Activated naive CD4-positive, alpha-beta T cell treated with anti-CD3 and anti-CD28 coated beads for 36 hours (primary cell): ENCODE measurements at regions of chr1 and their contacts with region 1.

Region 1: GRCh38 chr1:12124693-12125421 is 41.9 kb upstream of the TNFRSF1B start:
- DNase-seq: peak; percentile 88
- H3K4me3 Mint-ChIP-seq: no peak overlapping the region
- H3K27ac Mint-ChIP-seq: no peak overlapping the region
- H3K4me1 Mint-ChIP-seq: peaks cover 44% of the 10 kb centered on the region
- H3K27me3 Mint-ChIP-seq: no peaks in the 10 kb centered on the region

Region 2: GRCh38 chr1:11681071-11681771 is 443.6 kb before region 1 on chr1 and contains the start of gene MAD2L2:
- CTCF ChIA-PET with region 1: no interaction called
- intact Hi-C with region 1: no loop called
- DNase-seq: peak; percentile 92
- H3K4me3 Mint-ChIP-seq: peak within 1 kb of the TSS; percentile 85
- H3K27ac Mint-ChIP-seq: peak within 1 kb of the TSS; percentile 88
- H3K4me1 Mint-ChIP-seq: peaks cover 10% of the 10 kb centered on the region
- H3K27me3 Mint-ChIP-seq: no peaks in the 10 kb centered on the region
- total RNA-seq, gene MAD2L2: 86.7 to 88.3 TPM

Region 3: GRCh38 chr1:12161662-12162458 is 37.0 kb after region 1 on chr1:
- CTCF ChIA-PET with region 1: interaction called, 12 read pairs
- intact Hi-C with region 1: loop called (anchors 2 kb)
- DNase-seq: peak; percentile 92
- H3K4me3 Mint-ChIP-seq: no peak overlapping the region
- H3K27ac Mint-ChIP-seq: peak overlapping the region; percentile 83
- H3K4me1 Mint-ChIP-seq: peaks cover 70% of the 10 kb centered on the region
- H3K27me3 Mint-ChIP-seq: no peaks in the 10 kb centered on the region

Region 4: DNA sequence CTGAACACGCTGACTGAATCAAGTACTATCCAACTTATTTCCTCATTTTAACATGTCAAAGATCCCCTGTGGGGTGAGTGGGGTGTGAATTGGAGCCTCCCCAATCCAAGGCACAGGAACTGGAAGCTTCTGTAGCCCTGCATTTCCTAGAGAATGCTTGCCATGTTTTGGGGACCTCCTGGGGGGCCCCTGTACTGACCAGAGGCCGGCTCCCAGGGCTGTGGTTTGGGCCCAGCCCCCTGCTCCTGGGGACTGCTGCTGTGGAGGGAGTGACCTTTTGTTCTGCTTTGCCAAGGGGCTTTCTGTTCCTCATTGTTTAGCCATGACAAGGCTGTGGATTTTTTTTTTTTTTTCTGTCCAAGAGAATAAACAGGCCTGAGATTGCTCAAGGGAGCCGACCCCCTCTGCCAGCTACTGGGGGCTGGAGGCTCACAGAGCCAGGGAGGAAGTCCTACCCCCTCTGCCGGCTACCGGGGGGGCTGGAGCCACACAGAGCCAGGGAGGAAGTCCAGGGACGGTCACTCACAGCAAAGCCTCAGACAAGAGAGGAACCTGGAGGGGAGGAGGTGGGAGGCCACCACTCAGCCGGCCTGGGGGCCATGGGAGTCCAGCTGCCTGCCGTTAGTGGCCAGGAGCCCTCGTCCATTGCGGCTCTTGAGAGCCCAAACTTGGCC is 59.3 kb after region 1 on chr1:
- CTCF ChIA-PET with region 1: interaction called, 33 read pairs
- intact Hi-C with region 1: no loop called
- DNase-seq: no peak
- H3K4me3 Mint-ChIP-seq: no peak overlapping the region
- H3K27ac Mint-ChIP-seq: no peak overlapping the region
- H3K4me1 Mint-ChIP-seq: peaks cover 44% of the 10 kb centered on the region
- H3K27me3 Mint-ChIP-seq: no peaks in the 10 kb centered on the region

Region 5: GRCh38 chr1:12215118-12215961 is 90.5 kb after region 1 on chr1:
- CTCF ChIA-PET with region 1: interaction called, 301 read pairs
- intact Hi-C with region 1: no loop called
- DNase-seq: no peak
- H3K4me3 Mint-ChIP-seq: no peak overlapping the region
- H3K27ac Mint-ChIP-seq: no peak overlapping the region
- H3K4me1 Mint-ChIP-seq: peaks cover 9% of the 10 kb centered on the region
- H3K27me3 Mint-ChIP-seq: no peaks in the 10 kb centered on the region

Region 6: DNA sequence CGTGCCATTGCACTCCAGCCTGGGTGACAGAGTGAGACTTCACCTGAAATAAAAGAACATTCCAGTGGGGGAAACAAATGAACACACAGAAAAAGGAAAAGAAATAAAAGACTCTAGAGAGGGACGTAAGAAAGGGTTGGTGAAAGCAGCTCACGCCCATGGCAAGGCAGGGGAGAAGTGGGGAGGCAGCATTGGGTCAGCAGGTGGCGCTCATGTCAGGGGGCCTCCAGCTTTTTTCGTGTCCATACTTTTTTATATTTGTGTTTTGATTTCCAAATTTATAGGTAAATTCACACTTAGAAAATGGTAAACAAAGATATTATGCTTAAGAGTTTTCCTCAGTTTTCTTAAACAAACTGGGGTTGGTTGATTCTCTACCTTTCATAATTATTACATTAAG is 150.5 kb after region 1 on chr1:
- CTCF ChIA-PET with region 1: interaction called, 12 read pairs
- intact Hi-C with region 1: no loop called
- DNase-seq: peak; percentile 70
- H3K4me3 Mint-ChIP-seq: no peak overlapping the region
- H3K27ac Mint-ChIP-seq: no peak overlapping the region
- H3K4me1 Mint-ChIP-seq: no peaks in the 10 kb centered on the region
- H3K27me3 Mint-ChIP-seq: no peaks in the 10 kb centered on the region

Region 7: DNA sequence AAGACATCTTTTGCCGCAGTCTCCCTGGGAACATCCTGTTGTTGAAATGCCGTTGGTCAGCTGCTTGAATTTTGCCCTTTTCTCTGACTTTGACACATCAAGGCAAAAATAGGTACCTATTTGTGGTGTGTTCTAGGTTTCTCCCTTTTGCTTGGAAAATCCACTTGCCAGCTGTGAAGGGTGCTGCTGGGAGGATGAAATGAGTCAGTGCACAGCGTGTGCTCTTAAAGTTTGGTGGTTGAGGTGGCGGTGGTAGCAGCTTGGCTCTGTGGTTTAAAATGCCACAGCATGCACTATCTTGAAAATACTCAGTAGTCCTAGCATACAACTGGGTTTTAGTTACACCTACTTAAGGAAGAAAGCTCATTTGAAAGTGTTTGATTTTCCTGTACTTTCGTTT is 309.3 kb after region 1 on chr1:
- CTCF ChIA-PET with region 1: no interaction called
- intact Hi-C with region 1: no loop called
- DNase-seq: peak; percentile 89
- H3K4me3 Mint-ChIP-seq: no peak overlapping the region
- H3K27ac Mint-ChIP-seq: peak overlapping the region; percentile 59
- H3K4me1 Mint-ChIP-seq: peaks cover 74% of the 10 kb centered on the region
- H3K27me3 Mint-ChIP-seq: no peaks in the 10 kb centered on the region